OCI-LY7 (cell line): ENCODE measurements at regions of chr10 and their contacts with region 1.

Region 1: GRCh38 chr10:14466257-14466656 is 135.5 kb upstream of the FRMD4A start:
- DNase-seq: no peak
- H3K4me3 ChIP-seq: no peak overlapping the region
- H3K27ac ChIP-seq: no peak overlapping the region
- H3K4me1 ChIP-seq: no peaks in the 10 kb centered on the region
- CTCF ChIP-seq: no peak

Region 2: DNA sequence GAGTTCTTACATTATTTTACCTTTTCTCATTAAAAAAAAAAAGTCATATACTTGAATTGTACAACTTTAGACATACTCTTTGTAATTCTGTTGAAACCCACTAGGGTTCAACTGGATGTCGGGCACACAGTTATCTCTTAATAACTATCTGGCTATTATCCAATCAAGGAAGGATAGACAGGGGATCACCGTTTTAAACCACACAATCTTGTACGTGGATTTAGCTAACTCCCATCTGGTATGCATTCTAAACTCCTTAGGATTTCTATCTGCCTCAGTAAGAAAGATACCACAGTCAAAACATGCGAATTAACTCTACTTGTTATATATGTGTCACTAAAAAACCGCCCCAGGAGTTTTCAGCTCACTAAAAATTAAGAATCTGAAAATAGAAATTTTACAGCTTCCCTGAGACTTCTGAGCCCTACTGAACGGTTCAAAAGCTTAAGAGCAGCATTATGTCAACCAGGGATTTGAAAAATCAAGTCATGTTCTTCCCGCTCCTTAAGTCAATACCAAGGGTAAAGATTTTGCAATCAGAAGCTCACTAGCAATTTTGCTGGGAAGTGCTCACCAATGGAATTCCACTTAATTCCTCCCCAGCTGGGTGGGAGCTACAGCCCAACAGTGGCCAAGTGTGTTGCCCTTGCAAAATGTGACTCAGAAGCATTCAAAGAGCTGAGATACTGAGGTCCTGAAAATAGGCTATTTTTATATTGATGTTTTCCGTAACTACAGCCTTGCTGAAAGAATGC is 402.5 kb before region 1 on chr10:
- CTCF ChIA-PET with region 1: no interaction called
- POLR2A ChIA-PET with region 1: no interaction called
- intact Hi-C with region 1: no loop called
- DNase-seq: no peak
- H3K4me3 ChIP-seq: no peak overlapping the region
- H3K27ac ChIP-seq: no peak overlapping the region
- H3K4me1 ChIP-seq: no peaks in the 10 kb centered on the region
- CTCF ChIP-seq: no peak

Region 3: DNA sequence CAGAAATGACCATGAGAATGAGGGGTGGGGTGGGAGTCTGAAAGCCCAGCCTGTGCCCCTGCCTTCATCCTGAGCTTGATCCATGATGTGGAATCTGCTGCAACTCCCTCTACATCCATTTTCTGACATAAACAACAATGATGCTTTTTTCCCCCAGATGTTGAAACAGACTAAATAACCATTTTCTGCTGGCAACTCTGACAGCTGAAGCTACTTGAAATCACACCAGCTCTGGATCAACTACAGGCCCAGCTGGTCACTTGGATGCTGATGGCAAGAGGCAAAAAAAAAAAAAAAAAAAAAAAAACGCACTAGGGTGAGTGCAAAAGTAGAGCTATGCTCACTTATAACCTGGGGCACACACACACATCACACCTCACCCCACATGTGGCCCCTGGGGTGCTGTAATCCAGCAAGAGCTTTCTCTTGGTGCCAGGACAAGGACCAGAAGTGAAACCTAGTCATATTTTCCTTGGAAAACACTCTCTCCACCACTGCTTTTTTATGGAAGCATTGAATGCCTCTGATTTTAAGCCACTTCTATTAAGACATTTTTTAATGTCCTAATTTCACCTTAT is 234.4 kb after region 1 on chr10:
- CTCF ChIA-PET with region 1: interaction called, 12 read pairs
- POLR2A ChIA-PET with region 1: no interaction called
- intact Hi-C with region 1: no loop called
- DNase-seq: no peak
- H3K4me3 ChIP-seq: no peak overlapping the region
- H3K27ac ChIP-seq: no peak overlapping the region
- H3K4me1 ChIP-seq: peaks cover 13% of the 10 kb centered on the region
- CTCF ChIP-seq: no peak